ENCODE measurements at regions of chr17 and their contacts with region 1.

Region 1: DNA sequence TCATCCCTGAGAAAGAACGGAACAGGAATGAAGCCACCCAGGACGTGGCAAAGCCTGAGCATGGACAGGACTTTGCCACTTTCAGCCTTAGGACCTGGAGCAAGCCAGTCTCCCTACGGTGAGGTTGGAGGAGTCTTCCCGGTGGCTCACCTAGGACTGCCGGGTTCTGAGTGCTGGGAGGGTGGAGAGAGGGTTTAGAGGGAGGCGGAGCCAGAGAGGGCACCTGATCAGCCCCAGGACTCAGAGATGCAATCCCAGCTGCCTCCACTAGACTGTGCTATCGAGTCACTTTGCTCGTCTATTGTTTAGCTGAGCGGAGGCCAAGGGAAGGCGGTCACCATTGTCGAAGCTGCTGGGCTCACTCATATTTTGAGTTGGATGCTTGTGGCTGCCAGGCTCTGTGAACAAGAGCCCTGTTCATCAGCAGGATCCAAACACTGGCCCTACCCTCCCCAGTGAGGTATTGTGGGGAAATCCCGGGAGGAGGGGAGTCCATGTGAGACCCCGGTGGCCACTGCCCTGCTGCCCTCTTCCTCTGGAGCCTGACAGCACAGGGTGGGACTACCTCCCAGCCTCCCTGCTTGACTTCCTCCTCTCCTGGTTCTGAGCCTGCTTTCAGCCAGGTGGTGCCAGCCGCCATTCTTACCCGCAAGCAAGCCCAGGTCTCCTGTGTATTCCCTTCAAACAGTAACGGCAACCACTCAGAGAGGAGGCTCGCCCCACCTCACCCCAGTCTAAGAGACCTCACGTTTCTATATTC is 7.0 kb downstream of the KRT14 start:
- DNase-seq: peak; percentile 97
- ATAC-seq: peak; percentile 99
- H3K4me3 Mint-ChIP-seq: no peak overlapping the region
- H3K27ac Mint-ChIP-seq: no peak overlapping the region
- H3K4me1 Mint-ChIP-seq: peaks cover 11% of the 10 kb centered on the region
- H3K27me3 Mint-ChIP-seq: peaks cover 29% of the 10 kb centered on the region
- CTCF ChIP-seq: peak; percentile 84

Region 2: DNA sequence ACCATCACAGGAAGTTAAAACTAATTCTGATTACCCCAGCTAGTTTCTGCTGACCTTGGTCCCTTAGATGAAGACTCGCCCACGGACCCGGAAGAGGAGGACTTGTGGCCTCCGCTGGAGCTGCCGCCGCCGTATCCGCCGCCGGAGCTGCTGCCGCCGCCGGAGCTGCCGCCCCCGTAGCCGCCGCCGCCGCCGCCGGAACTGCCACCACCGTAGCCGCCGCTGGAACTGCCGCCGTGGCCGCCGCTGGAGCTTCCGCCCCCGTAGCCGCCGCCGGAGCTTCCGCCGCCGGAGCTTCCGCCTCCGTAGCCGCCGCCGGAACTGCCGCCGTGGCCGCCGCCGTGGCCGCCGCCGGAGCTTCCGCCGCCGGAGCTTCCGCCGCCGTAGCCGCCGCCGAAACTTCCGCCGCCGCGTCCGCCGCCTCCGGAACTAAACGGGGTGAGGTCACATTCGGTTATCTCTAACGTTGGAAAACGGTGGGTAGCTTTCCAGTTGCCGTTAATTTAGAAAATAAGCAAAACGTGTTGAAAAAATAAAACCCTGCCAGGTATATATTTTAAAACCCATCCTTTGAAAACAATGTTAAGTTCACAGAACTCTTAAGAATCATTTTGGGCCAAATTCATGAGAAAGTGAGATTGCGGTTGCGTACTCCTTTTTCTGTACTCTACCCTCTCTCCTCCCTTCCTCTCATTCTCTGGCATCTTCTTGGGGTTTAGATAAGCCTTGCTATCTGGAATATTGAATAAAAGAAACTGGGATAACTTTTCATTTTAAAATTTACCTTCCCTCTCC is 760.7 kb before region 1 on chr17:
- CTCF ChIA-PET with region 1: interaction called, 10 read pairs
- POLR2A ChIA-PET with region 1: no interaction called
- DNase-seq: peak; percentile 71
- ATAC-seq: peak; percentile 66
- H3K4me3 Mint-ChIP-seq: peak overlapping the region; percentile 90
- H3K27ac Mint-ChIP-seq: peak overlapping the region; percentile 71; the same call in 1 of the 2 replicates
- H3K4me1 Mint-ChIP-seq: peaks cover 14% of the 10 kb centered on the region
- H3K27me3 Mint-ChIP-seq: peaks cover 47% of the 10 kb centered on the region
- CTCF ChIP-seq: no peak

Region 3: DNA sequence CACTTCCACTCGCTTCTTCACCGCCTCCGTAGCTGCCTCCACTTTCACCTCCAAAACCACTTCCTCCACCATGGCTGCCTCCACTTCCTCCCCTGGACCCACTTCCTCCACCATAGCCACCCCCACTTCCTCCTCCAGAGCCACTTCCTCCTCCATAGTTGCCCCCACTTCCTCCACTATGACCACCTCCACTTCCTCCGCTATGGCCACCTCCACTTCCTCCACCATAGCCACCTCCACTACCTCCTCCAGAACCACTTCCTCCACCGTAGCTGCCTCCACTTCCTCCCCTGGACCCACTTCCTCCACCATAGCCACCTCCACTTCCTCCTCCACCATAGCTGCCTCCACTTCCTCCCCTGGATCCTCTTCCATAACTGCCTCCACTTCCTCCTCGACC is 12.3 kb before region 1 on chr17:
- CTCF ChIA-PET with region 1: interaction called, 22 read pairs
- POLR2A ChIA-PET with region 1: no interaction called
- DNase-seq: no peak
- ATAC-seq: no peak
- H3K4me3 Mint-ChIP-seq: no peak overlapping the region
- H3K27ac Mint-ChIP-seq: no peak overlapping the region
- H3K4me1 Mint-ChIP-seq: no peaks in the 10 kb centered on the region
- H3K27me3 Mint-ChIP-seq: peaks cover 22% of the 10 kb centered on the region
- CTCF ChIP-seq: no peak

Region 4: DNA sequence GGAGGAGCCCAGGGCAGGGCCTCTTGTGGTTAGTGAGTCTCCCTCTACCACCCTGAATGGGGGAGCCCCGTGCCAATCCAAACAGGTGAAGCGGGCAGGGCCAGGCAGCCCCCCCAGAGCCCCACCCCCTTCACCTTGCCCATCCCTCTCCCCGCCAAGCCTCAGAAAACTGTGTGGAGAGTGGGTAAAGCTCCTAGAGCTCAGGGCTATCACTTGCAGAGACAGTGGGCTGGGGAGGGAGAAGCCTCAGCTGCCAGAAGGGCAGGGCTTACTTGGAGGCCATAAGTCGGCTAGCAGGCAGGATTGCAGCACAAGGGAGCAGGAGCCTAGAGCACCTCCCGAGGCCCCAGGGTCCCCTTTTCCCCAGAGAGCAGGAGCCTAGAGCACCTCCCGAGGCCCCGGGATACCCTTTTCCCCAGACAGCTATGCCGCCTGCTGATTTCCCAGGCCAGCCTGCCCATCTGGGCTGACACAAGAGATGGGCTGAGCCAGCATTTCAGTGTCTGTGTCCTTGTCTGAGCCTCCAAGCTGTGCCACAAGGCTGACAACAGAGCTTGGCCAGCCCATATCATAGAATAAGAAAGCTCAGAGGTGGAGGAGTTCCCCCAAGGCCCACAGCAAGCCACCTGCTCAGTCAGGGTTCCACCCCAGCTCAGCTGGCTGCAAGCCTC is 13.8 kb after region 1 on chr17:
- CTCF ChIA-PET with region 1: interaction called, 11 read pairs
- POLR2A ChIA-PET with region 1: no interaction called
- DNase-seq: no peak
- ATAC-seq: no peak
- H3K4me3 Mint-ChIP-seq: no peak overlapping the region
- H3K27ac Mint-ChIP-seq: no peak overlapping the region
- H3K4me1 Mint-ChIP-seq: peaks cover 3% of the 10 kb centered on the region
- H3K27me3 Mint-ChIP-seq: no peaks in the 10 kb centered on the region; the same call in 1 of the 2 replicates
- CTCF ChIP-seq: no peak

Region 5: DNA sequence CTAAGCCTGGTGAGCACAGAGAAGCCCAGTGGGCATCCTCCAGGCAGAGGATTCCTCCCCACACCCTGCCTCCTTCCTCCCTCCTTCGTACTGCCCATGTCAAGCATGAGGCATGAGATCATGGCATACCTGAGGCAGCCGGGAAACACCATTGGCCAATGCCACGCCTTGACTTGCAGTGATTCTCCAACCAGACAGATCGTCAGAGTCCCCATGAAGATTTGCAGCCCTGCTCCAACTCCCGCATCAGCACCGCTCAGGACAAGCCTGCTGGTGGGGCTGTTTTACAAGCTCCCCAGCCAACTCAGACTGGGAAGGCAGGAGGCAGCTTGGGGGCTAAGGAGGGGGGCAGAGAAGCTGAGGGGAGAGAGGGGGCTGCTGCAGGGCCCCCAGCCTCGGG is 35.8 kb after region 1 on chr17:
- CTCF ChIA-PET with region 1: interaction called, 16 read pairs
- POLR2A ChIA-PET with region 1: no interaction called
- DNase-seq: no peak
- ATAC-seq: peak; percentile 65
- H3K4me3 Mint-ChIP-seq: no peak overlapping the region
- H3K27ac Mint-ChIP-seq: no peak overlapping the region
- H3K4me1 Mint-ChIP-seq: peaks cover 10% of the 10 kb centered on the region; the same call in 1 of the 2 replicates
- H3K27me3 Mint-ChIP-seq: no peaks in the 10 kb centered on the region
- CTCF ChIP-seq: no peak

Region 6: DNA sequence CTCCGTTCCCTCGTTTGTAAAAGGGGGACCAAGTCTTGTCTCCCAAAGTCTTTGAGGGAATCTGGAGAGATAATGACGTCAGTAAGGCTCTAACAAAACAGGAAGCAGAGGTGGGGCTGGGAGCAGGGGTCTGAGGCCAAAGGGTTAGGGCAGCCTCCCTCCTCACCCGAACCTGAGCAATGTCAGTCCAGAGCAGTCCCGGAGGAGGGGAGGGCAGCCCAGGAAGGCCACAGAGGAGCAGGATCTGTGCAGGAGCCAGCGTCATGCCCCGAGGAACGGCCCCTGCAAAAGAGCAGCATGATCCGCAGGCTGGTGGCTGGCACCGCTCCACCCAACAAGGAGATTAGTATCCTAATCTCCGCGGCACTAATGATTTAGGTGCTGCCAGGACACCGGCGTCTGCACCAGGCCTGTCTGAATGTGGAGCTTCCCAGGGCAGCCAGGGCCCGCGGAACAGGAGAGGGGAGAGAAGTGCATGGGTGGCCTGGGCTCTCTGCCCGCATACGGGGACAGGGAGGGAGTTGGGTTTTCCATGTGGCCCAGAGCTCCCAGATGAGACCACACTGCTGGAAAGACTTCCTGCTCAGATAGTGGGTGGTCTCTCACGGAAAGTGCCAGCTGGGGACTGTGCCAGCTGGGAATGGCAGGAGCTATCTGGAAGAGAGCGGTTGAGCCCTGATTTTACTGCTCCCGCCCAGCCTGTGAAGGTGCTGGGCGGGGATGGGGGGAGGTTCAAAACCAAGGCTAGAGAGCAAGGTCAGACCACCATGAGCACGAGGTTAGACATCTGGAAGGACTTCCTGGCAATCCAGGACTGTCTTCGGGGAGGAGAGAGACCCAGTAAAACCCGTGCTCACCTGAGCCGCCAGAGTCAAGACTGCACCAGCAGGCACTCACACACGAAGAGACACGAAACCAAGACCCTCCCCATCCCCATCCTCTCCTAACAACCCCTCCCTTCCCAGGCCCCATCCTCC is 55.7 kb after region 1 on chr17:
- CTCF ChIA-PET with region 1: interaction called, 22 read pairs
- POLR2A ChIA-PET with region 1: no interaction called
- DNase-seq: no peak
- ATAC-seq: peak; percentile 62
- H3K4me3 Mint-ChIP-seq: no peak overlapping the region
- H3K27ac Mint-ChIP-seq: peak overlapping the region; percentile 84
- H3K4me1 Mint-ChIP-seq: peaks cover 10% of the 10 kb centered on the region
- H3K27me3 Mint-ChIP-seq: no peaks in the 10 kb centered on the region
- CTCF ChIP-seq: no peak